ENCODE measurements at regions of chr9 and their contacts with region 1.

Region 1: GRCh38 chr9:117825609-117826347 is 121.6 kb downstream of the TLR4 start:
- DNase-seq: no peak
- H3K4me3 ChIP-seq: no peak overlapping the region
- H3K27ac ChIP-seq: no peak overlapping the region
- H3K4me1 ChIP-seq: no peaks in the 10 kb centered on the region
- H3K27me3 ChIP-seq: no peaks in the 10 kb centered on the region
- CTCF ChIP-seq: no peak

Region 2: DNA sequence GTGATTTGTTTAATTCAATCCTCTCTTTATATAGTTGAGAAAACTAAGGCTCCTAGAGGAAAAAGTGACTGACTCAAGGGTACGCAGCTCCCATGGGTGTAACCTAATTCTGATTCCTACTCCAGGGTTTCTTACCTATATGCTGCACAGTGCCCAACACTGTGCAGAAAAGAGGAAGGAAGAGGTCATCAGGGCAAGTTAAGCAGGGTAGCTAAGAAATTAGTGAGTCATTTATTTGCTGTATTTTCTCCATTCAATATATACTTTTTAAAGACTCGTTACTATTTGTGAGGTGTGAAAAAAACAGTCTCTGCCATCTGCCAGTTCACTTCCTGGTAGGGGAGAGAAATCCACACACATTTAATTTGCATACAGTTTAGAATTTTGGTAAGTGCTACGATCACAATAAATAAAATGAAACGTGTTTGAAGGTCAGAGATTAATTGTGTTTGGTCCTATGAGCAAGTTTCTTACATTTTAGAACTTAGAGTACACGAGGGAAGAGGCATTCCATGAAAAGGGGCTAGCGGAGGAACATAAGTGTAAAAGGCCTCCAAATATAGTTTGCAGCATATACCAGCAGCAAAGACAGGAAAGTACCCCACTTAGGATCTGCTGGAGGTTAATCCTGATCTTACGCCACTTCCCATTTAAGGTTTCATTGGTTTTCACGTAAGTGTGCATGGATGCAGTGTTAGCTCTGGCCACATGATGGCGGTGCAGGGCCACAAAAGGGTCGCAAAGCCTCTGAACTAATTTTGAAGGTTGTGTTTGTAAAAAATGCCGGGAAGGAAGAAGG is 181.4 kb before region 1 on chr9:
- CTCF ChIA-PET with region 1: no interaction called
- dilution Hi-C with region 1: no loop called
- in situ Hi-C with region 1: no loop called
- intact Hi-C with region 1: no loop called
- DNase-seq: peak; percentile 55
- H3K4me3 ChIP-seq: peak overlapping the region; percentile 5 to 36 (median 24)
- H3K27ac ChIP-seq: no peak overlapping the region
- H3K4me1 ChIP-seq: no peaks in the 10 kb centered on the region
- H3K27me3 ChIP-seq: peaks cover 5% of the 10 kb centered on the region
- CTCF ChIP-seq: peak; percentile 98 to 99

Region 3: DNA sequence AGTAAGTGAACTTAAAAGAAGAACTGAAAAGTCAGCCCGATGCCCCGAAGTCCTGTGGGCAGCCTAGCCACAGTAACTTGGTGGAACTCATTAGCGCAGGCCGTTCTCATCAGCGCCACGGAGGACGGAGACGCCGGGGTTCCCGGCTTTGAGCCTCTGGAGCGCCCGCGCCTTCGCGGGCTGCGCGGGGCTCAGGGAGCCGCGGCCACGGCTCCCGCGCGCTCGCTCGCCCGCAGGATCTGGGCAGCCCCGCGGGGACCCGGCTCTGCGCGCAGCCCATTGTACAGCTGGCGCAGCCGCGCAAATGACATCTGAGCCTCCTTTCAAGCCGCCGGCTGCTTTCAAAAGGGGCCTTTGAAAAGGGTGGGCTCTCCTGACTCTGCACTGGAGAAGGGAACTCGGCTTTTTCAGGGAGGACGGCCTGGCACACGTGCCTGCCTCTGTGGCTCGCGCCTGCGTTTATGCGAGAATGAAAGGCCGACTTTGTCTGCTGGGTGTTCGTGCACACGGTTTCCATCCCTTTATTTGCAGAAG is 80.9 kb before region 1 on chr9:
- CTCF ChIA-PET with region 1: no interaction called
- dilution Hi-C with region 1: no loop called
- in situ Hi-C with region 1: loop called in 1 of 2 experiments (anchors 25 kb)
- intact Hi-C with region 1: no loop called
- DNase-seq: no peak
- H3K4me3 ChIP-seq: no peak overlapping the region
- H3K27ac ChIP-seq: no peak overlapping the region
- H3K4me1 ChIP-seq: no peaks in the 10 kb centered on the region
- H3K27me3 ChIP-seq: peaks cover 7% of the 10 kb centered on the region
- CTCF ChIP-seq: no peak